A549 (cell line): ENCODE measurements at regions of chr12 and their contacts with region 1.

Region 1: DNA sequence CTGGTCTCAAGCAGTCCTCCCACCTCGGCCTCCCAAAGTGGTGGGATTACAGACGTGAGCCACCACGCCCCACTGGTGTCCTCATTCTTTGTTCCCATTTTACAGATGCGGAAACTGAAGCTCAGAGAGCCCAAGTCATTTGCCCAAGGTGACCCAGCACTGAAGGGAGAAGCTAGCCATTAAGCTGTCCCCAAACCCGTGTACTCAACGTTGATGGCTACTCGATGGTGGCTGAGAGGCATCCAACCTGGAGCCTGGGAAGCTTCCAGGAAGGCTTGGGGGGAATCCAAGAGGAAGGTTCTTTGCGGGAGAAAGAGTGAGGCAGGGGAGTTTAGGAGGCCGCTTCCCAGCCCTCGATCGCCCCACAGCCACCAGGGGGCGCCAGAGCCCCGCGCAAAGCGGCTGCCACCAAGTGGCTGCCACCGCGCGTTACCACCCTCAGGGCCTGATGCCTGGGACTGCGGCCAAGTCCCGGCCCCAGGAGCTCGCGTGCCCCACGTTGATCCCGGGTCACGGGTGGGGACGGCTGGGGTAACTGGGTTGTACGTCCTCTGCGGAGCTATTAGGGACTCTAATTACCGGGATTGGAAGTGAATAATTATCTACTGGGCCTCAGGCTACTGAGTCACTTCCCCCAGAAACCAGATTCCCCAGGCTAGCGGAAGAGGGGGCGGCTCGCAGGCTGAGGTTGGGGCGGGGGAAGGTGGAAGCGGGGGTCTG is 8.8 kb upstream of the SH2B3 start:
- DNase-seq: peak; percentile 85 to 87
- ATAC-seq: peak; percentile 87 to 97
- H3K4me3 ChIP-seq: peak overlapping the region; percentile 33
- H3K27ac ChIP-seq: peak overlapping the region; percentile 66 to 83
- H3K4me1 ChIP-seq: peaks cover 6% of the 10 kb centered on the region; the same call in 1 of the 3 replicates
- CTCF ChIP-seq: peak; percentile 99
- EP300 ChIP-seq: no peak; a peak in 1 of 5 replicates
- POLR2A ChIP-seq: no peak
- RAD21 ChIP-seq: peak; percentile 96 to 97

Region 2: DNA sequence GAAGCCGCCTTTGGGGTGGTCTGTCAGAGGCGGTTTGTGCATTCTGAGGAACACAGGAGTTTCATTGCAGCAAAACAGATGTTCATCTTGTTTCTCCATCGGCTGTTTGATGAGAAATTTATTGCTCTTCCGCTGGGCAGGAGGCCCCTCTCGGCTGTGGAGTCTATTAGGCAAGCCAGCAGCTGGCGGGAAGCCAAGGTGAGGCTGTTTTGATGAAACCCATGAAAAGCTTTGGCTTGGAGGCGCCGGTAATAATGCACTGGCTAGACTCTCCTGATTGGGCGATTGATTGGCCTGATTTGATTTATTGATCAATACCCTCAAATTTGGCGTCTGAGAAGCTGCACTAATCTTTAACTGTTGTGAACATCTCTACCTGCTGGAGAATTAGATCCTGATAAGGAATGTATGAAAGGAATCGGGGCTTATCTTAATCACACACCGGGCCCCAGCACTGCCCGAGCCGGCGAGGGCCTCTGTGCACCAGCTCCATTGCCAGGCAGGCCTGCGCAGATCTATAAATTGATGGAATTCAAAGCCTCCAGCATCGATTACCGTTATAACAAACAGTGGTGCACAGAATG is 215.7 kb before region 1 on chr12:
- CTCF ChIA-PET with region 1: no interaction called
- POLR2A ChIA-PET with region 1: no interaction called
- DNase-seq: no peak
- ATAC-seq: no peak
- H3K4me3 ChIP-seq: no peak overlapping the region
- H3K27ac ChIP-seq: no peak overlapping the region
- H3K4me1 ChIP-seq: no peaks in the 10 kb centered on the region
- CTCF ChIP-seq: no peak
- EP300 ChIP-seq: no peak
- POLR2A ChIP-seq: no peak
- RAD21 ChIP-seq: no peak

Region 3: GRCh38 chr12:111313833-111314259 is 83.0 kb before region 1 on chr12:
- CTCF ChIA-PET with region 1: interaction called, 12 read pairs
- POLR2A ChIA-PET with region 1: no interaction called
- DNase-seq: peak; percentile 76 to 95
- ATAC-seq: peak; percentile 78 to 88
- H3K4me3 ChIP-seq: no peak overlapping the region
- H3K27ac ChIP-seq: no peak overlapping the region
- H3K4me1 ChIP-seq: no peaks in the 10 kb centered on the region
- CTCF ChIP-seq: peak; percentile 87
- EP300 ChIP-seq: no peak
- POLR2A ChIP-seq: no peak
- RAD21 ChIP-seq: peak; percentile 81 to 92

Region 4: DNA sequence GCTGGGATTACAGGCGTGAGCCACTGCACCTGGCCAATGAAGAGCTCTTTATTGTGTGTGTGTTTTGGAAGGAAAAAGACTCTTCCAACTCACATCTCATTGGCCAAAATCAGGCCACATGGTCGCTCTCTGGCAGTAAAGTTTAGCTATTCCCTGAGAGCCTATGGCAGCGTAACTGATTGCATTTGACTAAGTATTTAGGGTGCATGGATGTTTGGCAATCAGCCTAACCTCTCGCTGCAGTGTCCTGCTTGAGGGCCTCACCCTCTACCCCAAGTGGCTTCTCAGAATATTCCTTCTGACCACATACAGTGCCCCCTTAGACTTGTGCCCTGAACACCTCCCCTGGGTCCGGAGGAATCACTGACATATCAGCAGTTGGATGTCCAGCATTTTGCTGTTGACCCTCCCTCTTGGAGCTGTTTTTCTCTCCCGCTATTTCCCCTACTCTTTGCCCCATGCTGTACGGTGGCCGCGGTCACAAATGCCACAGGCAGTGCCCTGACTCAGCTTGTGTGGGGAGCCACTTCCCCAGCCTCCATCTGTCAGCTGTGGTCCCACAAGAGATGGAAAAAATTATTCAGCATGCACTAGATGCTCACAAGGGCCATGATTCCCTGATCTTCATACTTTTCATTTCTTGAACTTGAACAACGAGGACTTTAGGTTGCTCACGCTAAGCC is 37.5 kb before region 1 on chr12:
- CTCF ChIA-PET with region 1: interaction called, 11 read pairs
- POLR2A ChIA-PET with region 1: no interaction called
- DNase-seq: no peak
- ATAC-seq: no peak; a peak in 1 of 6 replicates
- H3K4me3 ChIP-seq: no peak overlapping the region
- H3K27ac ChIP-seq: no peak overlapping the region
- H3K4me1 ChIP-seq: peaks cover 7% of the 10 kb centered on the region; the same call in 2 of the 3 replicates
- CTCF ChIP-seq: no peak
- EP300 ChIP-seq: no peak
- POLR2A ChIP-seq: no peak
- RAD21 ChIP-seq: no peak

Region 5: GRCh38 chr12:111386885-111387284 is 10.0 kb before region 1 on chr12:
- CTCF ChIA-PET with region 1: interaction called, 77 read pairs
- POLR2A ChIA-PET with region 1: no interaction called
- DNase-seq: no peak
- ATAC-seq: no peak
- H3K4me3 ChIP-seq: no peak overlapping the region
- H3K27ac ChIP-seq: no peak overlapping the region
- H3K4me1 ChIP-seq: no peaks in the 10 kb centered on the region
- CTCF ChIP-seq: no peak
- EP300 ChIP-seq: no peak
- POLR2A ChIP-seq: no peak
- RAD21 ChIP-seq: no peak

Region 6: GRCh38 chr12:111444925-111445725 is 48.2 kb after region 1 on chr12:
- CTCF ChIA-PET with region 1: interaction called, 240 read pairs
- POLR2A ChIA-PET with region 1: no interaction called
- DNase-seq: no peak
- ATAC-seq: peak; percentile 3 to 11; a peak in 3 of 6 replicates
- H3K4me3 ChIP-seq: no peak overlapping the region
- H3K27ac ChIP-seq: no peak overlapping the region
- H3K4me1 ChIP-seq: no peaks in the 10 kb centered on the region
- CTCF ChIP-seq: no peak
- EP300 ChIP-seq: no peak
- POLR2A ChIP-seq: no peak
- RAD21 ChIP-seq: no peak

Region 7: DNA sequence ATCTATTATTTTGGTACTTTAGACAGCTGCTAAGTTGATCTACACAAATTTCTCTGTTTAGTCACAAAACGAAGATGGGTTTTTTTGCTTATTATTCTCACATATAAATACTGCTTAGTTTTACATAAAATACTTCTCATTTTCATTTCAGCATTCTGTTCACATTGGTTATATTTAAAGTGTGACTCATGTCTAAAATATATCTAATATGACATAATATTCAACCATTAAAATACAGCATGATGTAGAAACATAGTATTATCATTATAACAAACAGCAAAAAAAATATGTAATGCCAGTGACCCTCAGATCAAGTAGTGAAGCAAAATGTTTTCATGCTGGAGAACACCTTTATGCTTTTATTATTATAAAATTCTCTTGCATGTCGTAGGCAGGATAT is 72.5 kb after region 1 on chr12:
- CTCF ChIA-PET with region 1: interaction called, 14 read pairs
- POLR2A ChIA-PET with region 1: no interaction called
- DNase-seq: no peak
- ATAC-seq: no peak
- H3K4me3 ChIP-seq: no peak overlapping the region
- H3K27ac ChIP-seq: no peak overlapping the region
- H3K4me1 ChIP-seq: peaks cover 16% of the 10 kb centered on the region; the same call in 1 of the 3 replicates
- CTCF ChIP-seq: no peak
- EP300 ChIP-seq: no peak
- POLR2A ChIP-seq: no peak
- RAD21 ChIP-seq: no peak

Region 8: GRCh38 chr12:111673503-111673902 is 276.6 kb after region 1 on chr12:
- CTCF ChIA-PET with region 1: interaction called, 18 read pairs
- POLR2A ChIA-PET with region 1: no interaction called
- DNase-seq: peak in 1 of 2 experiments; percentile 56
- ATAC-seq: peak; percentile 70 to 85; a peak in 4 of 6 replicates
- H3K4me3 ChIP-seq: no peak overlapping the region
- H3K27ac ChIP-seq: no peak overlapping the region
- H3K4me1 ChIP-seq: no peaks in the 10 kb centered on the region
- CTCF ChIP-seq: peak; percentile 61
- EP300 ChIP-seq: no peak
- POLR2A ChIP-seq: no peak
- RAD21 ChIP-seq: peak; percentile 63 to 74